Heart right ventricle (tissue), 16 donors: ENCODE measurements at regions of chr2 and their contacts with region 1.

Region 1: GRCh38 chr2:12192762-12193161 is 446.3 kb downstream of the LPIN1 start:
- DNase-seq: peak in 1 of 2 donors; percentile 40
- ATAC-seq: peak in 7 of 8 donors; percentile 58 to 89 (median 79)
- H3K4me3 ChIP-seq: no peak overlapping the region
- H3K27ac ChIP-seq: peak overlapping the region in 8 of 10 donors; percentile 17 to 75 (median 68)
- H3K4me1 ChIP-seq: peaks cover 0 to 22% (median 8%) of the 10 kb centered on the region in 9 donors
- H3K27me3 ChIP-seq: no peaks in the 10 kb centered on the region
- CTCF ChIP-seq: no peak

Region 2: GRCh38 chr2:12097859-12098258 is 94.9 kb before region 1 on chr2:
- intact Hi-C with region 1: no loop called
- DNase-seq: no peak
- ATAC-seq: no peak
- H3K4me3 ChIP-seq: no peak overlapping the region
- H3K27ac ChIP-seq: no peak overlapping the region
- H3K4me1 ChIP-seq: no peaks in the 10 kb centered on the region
- H3K27me3 ChIP-seq: no peaks in the 10 kb centered on the region
- CTCF ChIP-seq: no peak

Region 3: GRCh38 chr2:12176623-12177454 is 15.9 kb before region 1 on chr2:
- intact Hi-C with region 1: loop called in 1 of 10 experiments (anchors 2 kb)
- DNase-seq: peak; percentile 32 to 71
- ATAC-seq: peak; percentile 63 to 95 (median 91)
- H3K4me3 ChIP-seq: no peak overlapping the region
- H3K27ac ChIP-seq: peak overlapping the region in 5 of 10 donors; percentile 10 to 73 (median 48)
- H3K4me1 ChIP-seq: peaks cover 3 to 32% (median 25%) of the 10 kb centered on the region in 9 donors
- H3K27me3 ChIP-seq: no peaks in the 10 kb centered on the region
- CTCF ChIP-seq: no peak

Region 4: GRCh38 chr2:12320991-12321641 is 128.4 kb after region 1 on chr2:
- intact Hi-C with region 1: loop called in 1 of 10 experiments (anchors 10 kb)
- DNase-seq: peak; percentile 26 to 36
- ATAC-seq: peak; percentile 66 to 86 (median 78)
- H3K4me3 ChIP-seq: no peak overlapping the region
- H3K27ac ChIP-seq: peak overlapping the region in 4 of 10 donors; percentile 3 to 69 (median 49)
- H3K4me1 ChIP-seq: peaks cover 0 to 28% (median 8%) of the 10 kb centered on the region in 9 donors
- H3K27me3 ChIP-seq: no peaks in the 10 kb centered on the region
- CTCF ChIP-seq: peak in 2 of 9 donors; percentile 11 to 16

Region 5: DNA sequence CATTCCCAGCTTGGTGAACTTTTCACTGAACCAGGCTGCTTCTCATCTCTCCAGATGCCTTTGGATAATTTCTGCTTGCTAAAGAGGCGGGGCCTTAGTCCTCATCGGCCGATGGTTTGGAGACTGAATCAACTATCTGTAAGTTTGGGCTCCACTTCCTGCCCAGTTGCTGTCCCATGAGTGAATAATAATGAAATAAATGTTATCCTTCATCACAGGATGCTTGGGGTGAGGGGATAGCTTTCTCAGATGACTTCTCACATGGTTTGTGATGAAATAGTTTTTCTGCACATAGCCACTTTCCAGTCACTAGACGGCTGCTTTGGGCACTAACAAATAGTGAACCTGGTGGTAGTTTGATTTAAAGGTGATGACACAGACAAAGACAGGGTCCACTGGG is 147.4 kb after region 1 on chr2:
- intact Hi-C with region 1: no loop called
- DNase-seq: no peak
- ATAC-seq: peak in 1 of 8 donors; percentile 35
- H3K4me3 ChIP-seq: no peak overlapping the region
- H3K27ac ChIP-seq: no peak overlapping the region
- H3K4me1 ChIP-seq: peaks cover 0 to 9% (median 0%) of the 10 kb centered on the region in 9 donors
- H3K27me3 ChIP-seq: no peaks in the 10 kb centered on the region
- CTCF ChIP-seq: no peak

Region 6: GRCh38 chr2:12970861-12971260 is 778.1 kb after region 1 on chr2:
- intact Hi-C with region 1: no loop called
- DNase-seq: no peak
- ATAC-seq: no peak
- H3K4me3 ChIP-seq: no peak overlapping the region
- H3K27ac ChIP-seq: no peak overlapping the region
- H3K4me1 ChIP-seq: peaks cover 0 to 5% (median 2%) of the 10 kb centered on the region in 9 donors
- H3K27me3 ChIP-seq: no peaks in the 10 kb centered on the region
- CTCF ChIP-seq: no peak